Activated B cell treated with CpG ODN at 0.5 μM for 24 hours (primary cell): ENCODE measurements at regions of chr5 and their contacts with region 1.

Region 1: GRCh38 chr5:134586866-134587524 is 45.6 kb downstream of the SAR1B start:
- DNase-seq: peak; percentile 79
- ATAC-seq: peak; percentile 91
- H3K4me3 Mint-ChIP-seq: peak overlapping the region; percentile 15
- H3K27ac Mint-ChIP-seq: no peak overlapping the region
- H3K4me1 Mint-ChIP-seq: peaks cover 18% of the 10 kb centered on the region
- H3K27me3 Mint-ChIP-seq: no peaks in the 10 kb centered on the region
- CTCF ChIP-seq: peak; percentile 20

Region 2: DNA sequence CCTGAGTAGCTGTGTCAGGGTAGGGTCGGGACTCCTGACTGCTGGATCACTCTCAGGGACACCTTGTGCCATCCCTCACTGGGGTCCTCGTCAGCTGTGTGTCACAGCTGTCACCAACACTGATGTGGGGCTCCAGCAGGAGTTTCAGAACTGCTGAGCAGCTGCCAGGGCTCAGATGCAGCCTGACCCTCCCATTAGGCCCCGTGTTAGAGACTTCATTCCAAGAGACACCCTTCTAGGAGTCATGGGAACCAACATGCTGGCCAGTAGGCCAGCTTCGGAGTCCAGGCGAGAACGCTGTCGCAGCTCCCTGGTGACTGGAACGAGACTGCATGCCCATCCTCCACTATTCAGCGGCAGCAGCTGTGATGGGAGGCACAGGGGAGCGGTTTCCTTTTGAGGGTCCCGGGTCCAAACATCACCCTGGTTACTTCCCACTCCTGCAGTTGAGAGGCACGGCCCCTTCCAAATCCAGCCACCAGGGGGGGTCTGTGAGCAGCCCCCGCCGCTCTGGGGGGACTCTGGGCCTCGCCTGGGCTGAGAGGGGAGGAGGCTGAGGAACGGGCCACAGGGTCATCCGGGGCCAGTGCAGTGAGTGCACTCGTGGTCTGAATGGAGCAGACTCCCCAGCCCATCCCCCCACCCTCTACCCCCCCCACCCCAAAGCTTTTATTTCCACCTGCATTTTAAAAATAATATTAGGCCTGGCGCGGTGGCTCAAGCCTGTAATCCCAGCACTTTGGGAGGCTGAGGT is 485.1 kb before region 1 on chr5:
- CTCF ChIA-PET with region 1: no interaction called
- POLR2A ChIA-PET with region 1: no interaction called
- intact Hi-C with region 1: no loop called
- DNase-seq: peak; percentile 76
- ATAC-seq: peak; percentile 38
- H3K4me3 Mint-ChIP-seq: peak overlapping the region; percentile 32
- H3K27ac Mint-ChIP-seq: peak overlapping the region; percentile 99
- H3K4me1 Mint-ChIP-seq: peaks cover 56% of the 10 kb centered on the region
- H3K27me3 Mint-ChIP-seq: no peaks in the 10 kb centered on the region
- CTCF ChIP-seq: no peak

Region 3: GRCh38 chr5:134184155-134185135 is 402.6 kb before region 1 on chr5:
- CTCF ChIA-PET with region 1: interaction called, 9 read pairs
- POLR2A ChIA-PET with region 1: no interaction called
- intact Hi-C with region 1: loop called (anchors 1 kb)
- DNase-seq: peak; percentile 59
- ATAC-seq: peak; percentile 99
- H3K4me3 Mint-ChIP-seq: no peak overlapping the region
- H3K27ac Mint-ChIP-seq: no peak overlapping the region
- H3K4me1 Mint-ChIP-seq: peaks cover 3% of the 10 kb centered on the region
- H3K27me3 Mint-ChIP-seq: no peaks in the 10 kb centered on the region
- CTCF ChIP-seq: no peak

Region 4: GRCh38 chr5:134296213-134296612 is 290.8 kb before region 1 on chr5:
- CTCF ChIA-PET with region 1: interaction called, 25 read pairs
- POLR2A ChIA-PET with region 1: no interaction called
- intact Hi-C with region 1: no loop called
- DNase-seq: no peak
- ATAC-seq: no peak
- H3K4me3 Mint-ChIP-seq: no peak overlapping the region
- H3K27ac Mint-ChIP-seq: no peak overlapping the region
- H3K4me1 Mint-ChIP-seq: no peaks in the 10 kb centered on the region
- H3K27me3 Mint-ChIP-seq: peaks cover 6% of the 10 kb centered on the region
- CTCF ChIP-seq: no peak

Region 5: GRCh38 chr5:134304311-134304710 is 282.7 kb before region 1 on chr5:
- CTCF ChIA-PET with region 1: interaction called, 38 read pairs
- POLR2A ChIA-PET with region 1: no interaction called
- intact Hi-C with region 1: loop called (anchors 1 kb)
- DNase-seq: no peak
- ATAC-seq: no peak
- H3K4me3 Mint-ChIP-seq: no peak overlapping the region
- H3K27ac Mint-ChIP-seq: no peak overlapping the region
- H3K4me1 Mint-ChIP-seq: no peaks in the 10 kb centered on the region
- H3K27me3 Mint-ChIP-seq: no peaks in the 10 kb centered on the region
- CTCF ChIP-seq: no peak

Region 6: GRCh38 chr5:134769206-134769605 is 182.2 kb after region 1 on chr5:
- CTCF ChIA-PET with region 1: no interaction called
- POLR2A ChIA-PET with region 1: no interaction called
- intact Hi-C with region 1: no loop called
- DNase-seq: no peak
- ATAC-seq: no peak
- H3K4me3 Mint-ChIP-seq: no peak overlapping the region
- H3K27ac Mint-ChIP-seq: no peak overlapping the region
- H3K4me1 Mint-ChIP-seq: no peaks in the 10 kb centered on the region
- H3K27me3 Mint-ChIP-seq: no peaks in the 10 kb centered on the region
- CTCF ChIP-seq: no peak